IMR-90 (cell line): ENCODE measurements at regions of chr17 and their contacts with region 1.

Region 1: DNA sequence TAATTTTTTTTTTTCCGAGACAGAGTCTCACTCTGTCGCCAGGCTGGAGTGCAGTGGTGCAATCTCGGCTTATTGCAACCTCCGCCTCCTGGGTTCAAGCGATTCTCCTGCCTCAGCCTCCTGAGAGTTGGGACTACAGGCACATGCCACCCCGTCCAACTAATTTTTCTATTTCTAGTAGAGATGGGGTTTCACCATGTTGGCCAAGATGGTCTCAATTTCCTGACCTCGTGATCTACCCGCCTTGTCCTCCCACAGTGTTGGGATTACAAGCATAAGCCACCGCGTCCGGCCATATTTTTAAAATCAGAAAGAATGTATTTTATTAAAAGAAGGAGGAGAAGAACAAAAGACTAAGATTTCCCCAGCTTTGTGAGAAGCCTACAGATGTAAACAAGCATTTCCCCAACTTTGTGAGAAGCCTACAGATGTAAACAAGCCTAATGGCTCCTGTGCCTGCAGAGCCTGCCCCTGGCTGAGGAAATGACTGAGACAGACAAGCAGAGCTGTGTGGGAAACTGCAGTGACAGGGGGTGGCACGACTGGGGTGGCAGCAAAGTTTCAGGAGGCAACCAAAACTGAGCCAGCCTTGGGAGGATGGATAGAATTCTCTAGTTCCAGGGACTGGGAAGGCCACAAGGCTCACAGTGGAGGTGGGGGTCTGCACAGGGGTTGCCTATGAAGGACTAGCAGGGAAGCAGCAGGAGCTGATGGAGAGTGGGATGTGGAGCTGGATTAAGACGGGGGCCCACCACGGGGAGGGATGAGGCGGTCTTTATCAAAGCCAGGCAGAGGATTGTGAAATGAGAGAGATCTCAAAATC is 22.9 kb downstream of the TOP3A start:
- DNase-seq: no peak
- ATAC-seq: no peak
- H3K4me3 ChIP-seq: no peak overlapping the region
- H3K27ac ChIP-seq: no peak overlapping the region
- H3K4me1 ChIP-seq: no peaks in the 10 kb centered on the region
- H3K27me3 ChIP-seq: no peaks in the 10 kb centered on the region
- CTCF ChIP-seq: no peak
- POLR2A ChIP-seq: no peak
- RAD21 ChIP-seq: no peak

Region 2: DNA sequence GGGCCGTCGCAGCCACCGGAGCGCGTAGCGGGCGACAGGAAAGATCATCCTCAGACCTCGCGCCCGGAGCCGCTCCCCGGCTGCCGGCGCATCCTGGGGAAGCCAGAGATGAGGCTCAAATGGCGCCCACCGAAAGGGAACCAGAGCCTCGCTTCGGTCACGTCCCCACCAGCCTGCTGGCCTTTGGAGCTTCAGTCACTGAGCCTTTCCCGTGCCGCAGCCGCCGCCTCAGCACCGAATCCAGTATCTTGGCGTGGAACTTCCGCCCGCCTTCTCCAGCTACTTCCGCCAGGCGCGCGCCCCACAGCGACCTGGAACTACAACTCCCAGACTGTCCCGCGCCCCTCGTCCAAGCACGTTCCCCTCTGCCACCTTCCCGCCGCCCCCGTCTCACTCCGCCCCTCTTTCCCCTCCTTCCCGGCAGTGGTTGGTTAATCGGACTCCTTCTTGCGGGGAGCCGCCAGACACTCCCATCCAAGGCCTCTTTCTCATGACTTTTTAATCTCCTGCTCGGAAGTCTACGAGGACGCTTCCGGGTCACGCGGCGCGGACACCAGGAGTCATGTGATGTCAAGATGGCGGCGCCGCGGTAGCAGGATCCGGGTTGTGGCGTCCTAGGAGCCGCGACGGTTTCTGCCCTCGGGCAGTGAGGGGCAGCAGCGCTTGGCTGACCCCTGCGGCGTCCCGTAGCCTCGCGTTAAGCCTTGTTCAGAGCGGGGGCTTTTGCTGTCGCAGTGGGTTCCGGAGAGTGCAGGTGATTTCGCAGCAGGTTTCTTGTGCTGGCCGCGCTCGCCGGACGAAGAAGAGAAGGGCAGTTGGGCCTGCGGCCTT is 23.0 kb after region 1 on chr17 and contains the starts of genes SMCR8 and TOP3A:
- CTCF ChIA-PET with region 1: interaction called, 3 read pairs
- POLR2A ChIA-PET with region 1: no interaction called
- dilution Hi-C with region 1: no loop called
- in situ Hi-C with region 1: no loop called
- intact Hi-C with region 1: loop called (anchors 2 kb)
- DNase-seq: peak; percentile 98
- ATAC-seq: peak; percentile 97
- H3K4me3 ChIP-seq: peak within 1 kb of the TSS; percentile 88
- H3K27ac ChIP-seq: peak within 1 kb of the TSS; percentile 83
- H3K4me1 ChIP-seq: peaks cover 10% of the 10 kb centered on the region
- H3K27me3 ChIP-seq: no peaks in the 10 kb centered on the region
- CTCF ChIP-seq: no peak
- POLR2A ChIP-seq: peak; percentile 90
- RAD21 ChIP-seq: no peak
- total RNA-seq, gene SMCR8: 10.6 and 10.9 TPM in 2 replicates
- total RNA-seq, gene TOP3A: 21.3 and 25.6 TPM in 2 replicates

Region 3: DNA sequence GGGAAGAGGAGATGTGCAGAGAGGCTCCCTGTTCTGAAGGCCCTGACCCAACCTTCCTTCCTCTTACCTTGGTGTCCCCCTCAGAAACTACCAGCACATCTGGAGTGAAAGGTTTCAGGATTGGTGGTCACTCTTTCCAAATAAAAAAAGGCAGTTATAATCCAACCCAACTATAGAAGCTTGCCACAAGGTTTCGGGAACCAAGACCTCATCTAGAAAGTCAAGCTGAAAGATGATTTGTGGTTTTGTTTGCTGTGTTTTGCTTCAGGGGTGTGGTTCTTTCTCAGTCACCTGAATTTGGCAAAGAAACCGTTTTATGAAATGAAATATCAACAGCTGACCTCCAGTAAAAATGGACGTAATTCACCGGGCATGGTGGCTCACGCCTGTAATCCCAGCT is 52.1 kb after region 1 on chr17:
- CTCF ChIA-PET with region 1: no interaction called
- POLR2A ChIA-PET with region 1: no interaction called
- dilution Hi-C with region 1: no loop called
- in situ Hi-C with region 1: no loop called
- intact Hi-C with region 1: no loop called
- DNase-seq: no peak
- ATAC-seq: no peak
- H3K4me3 ChIP-seq: no peak overlapping the region
- H3K27ac ChIP-seq: no peak overlapping the region
- H3K4me1 ChIP-seq: no peaks in the 10 kb centered on the region
- H3K27me3 ChIP-seq: no peaks in the 10 kb centered on the region
- CTCF ChIP-seq: no peak
- POLR2A ChIP-seq: no peak
- RAD21 ChIP-seq: no peak